Thyroid gland (tissue), 4 donors: ENCODE measurements at regions of chr6 and their contacts with region 1.

Region 1: DNA sequence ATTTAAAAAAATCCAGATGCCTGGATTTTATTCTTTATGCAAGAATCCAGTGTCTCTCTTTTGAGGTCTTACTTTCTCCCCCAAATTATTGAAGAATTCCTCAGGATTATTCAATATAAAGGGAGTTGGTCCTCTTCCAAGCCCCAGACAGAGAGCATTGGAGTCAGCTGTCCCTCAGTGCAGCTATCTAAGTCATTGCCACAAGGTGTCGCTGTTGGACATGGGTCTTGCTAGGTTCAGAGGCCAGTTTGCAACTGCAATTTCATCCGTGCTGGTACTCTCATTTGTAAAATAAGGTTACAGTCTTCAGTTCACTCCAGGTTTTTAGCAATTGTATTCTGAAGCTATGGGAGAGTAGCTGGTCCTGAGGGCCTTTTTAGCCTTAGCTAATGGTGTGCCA is 27.8 kb downstream of the CCN2 start:
- DNase-seq: peak; percentile 62 to 67
- H3K4me3 ChIP-seq: no peak overlapping the region
- H3K27ac ChIP-seq: no peak overlapping the region
- H3K4me1 ChIP-seq: no peaks in the 10 kb centered on the region
- H3K27me3 ChIP-seq: no peaks in the 10 kb centered on the region
- CTCF ChIP-seq: peak in 5 of 6 experiments; percentile 43 to 70 (median 64)
- POLR2A ChIP-seq: no peak

Region 2: GRCh38 chr6:132161283-132161682 is 237.9 kb after region 1 on chr6:
- intact Hi-C with region 1: loop called (anchors 5 kb)
- DNase-seq: no peak
- H3K4me3 ChIP-seq: no peak overlapping the region
- H3K27ac ChIP-seq: no peak overlapping the region
- H3K4me1 ChIP-seq: no peaks in the 10 kb centered on the region
- H3K27me3 ChIP-seq: no peaks in the 10 kb centered on the region
- CTCF ChIP-seq: peak in 5 of 6 experiments; percentile 46 to 70 (median 60)
- POLR2A ChIP-seq: no peak

Region 3: DNA sequence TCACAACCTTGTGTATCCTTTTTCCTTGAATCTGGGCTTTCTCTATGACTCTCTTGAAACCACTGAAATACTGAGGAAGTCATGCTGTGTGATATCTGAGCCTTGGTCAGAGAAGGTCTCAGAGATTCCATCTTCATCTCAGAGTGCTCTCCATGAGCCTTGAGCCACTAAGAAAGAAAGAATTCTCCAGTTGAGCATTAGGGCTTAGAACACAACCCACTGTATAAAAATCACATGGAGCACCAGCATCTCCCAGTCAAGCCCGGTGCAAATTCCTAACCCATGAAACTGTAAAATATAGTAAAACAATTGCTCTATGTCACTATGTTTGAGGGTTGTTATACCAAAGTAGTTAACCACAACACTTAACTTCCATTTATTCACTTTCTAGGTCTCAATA is 296.5 kb after region 1 on chr6:
- intact Hi-C with region 1: loop called (anchors 5 kb)
- DNase-seq: no peak
- H3K4me3 ChIP-seq: no peak overlapping the region
- H3K27ac ChIP-seq: no peak overlapping the region
- H3K4me1 ChIP-seq: no peaks in the 10 kb centered on the region
- H3K27me3 ChIP-seq: no peaks in the 10 kb centered on the region
- CTCF ChIP-seq: no peak
- POLR2A ChIP-seq: no peak

Region 4: GRCh38 chr6:133326584-133326983 is 1403.2 kb after region 1 on chr6:
- intact Hi-C with region 1: no loop called
- DNase-seq: no peak
- H3K4me3 ChIP-seq: no peak overlapping the region
- H3K27ac ChIP-seq: no peak overlapping the region
- H3K4me1 ChIP-seq: no peaks in the 10 kb centered on the region
- H3K27me3 ChIP-seq: no peaks in the 10 kb centered on the region
- CTCF ChIP-seq: no peak
- POLR2A ChIP-seq: no peak